IMR-90 (cell line): ENCODE measurements at regions of chr1 and their contacts with region 1.

Region 1: GRCh38 chr1:66695116-66695515 is 57.1 kb upstream of the DYNLT5 start:
- DNase-seq: no peak
- ATAC-seq: no peak
- H3K4me3 ChIP-seq: no peak overlapping the region
- H3K27ac ChIP-seq: no peak overlapping the region
- H3K4me1 ChIP-seq: no peaks in the 10 kb centered on the region
- H3K27me3 ChIP-seq: no peaks in the 10 kb centered on the region
- CTCF ChIP-seq: no peak
- POLR2A ChIP-seq: no peak
- RAD21 ChIP-seq: no peak

Region 2: DNA sequence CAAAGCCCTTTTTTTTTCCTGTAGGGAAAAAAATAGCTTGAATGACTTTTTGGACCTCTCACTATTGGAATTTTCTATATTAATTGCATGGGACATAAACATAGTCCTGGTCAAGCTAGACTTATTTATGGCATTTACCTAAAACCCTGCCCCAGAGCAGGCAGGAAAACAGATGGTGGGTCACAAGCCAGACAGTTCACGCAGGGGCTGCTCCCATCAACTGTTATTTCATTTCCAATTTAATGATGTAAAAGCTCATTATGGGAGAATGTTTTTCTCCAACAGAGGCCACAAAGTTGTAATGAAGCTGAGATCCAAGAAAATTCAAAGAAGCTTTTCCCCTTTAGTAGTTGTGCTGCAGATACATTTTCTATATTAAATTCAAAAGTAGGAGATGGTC is 62.0 kb before region 1 on chr1:
- CTCF ChIA-PET with region 1: no interaction called
- POLR2A ChIA-PET with region 1: no interaction called
- dilution Hi-C with region 1: no loop called
- in situ Hi-C with region 1: loop called (anchors 10 kb)
- intact Hi-C with region 1: no loop called
- DNase-seq: no peak
- ATAC-seq: no peak
- H3K4me3 ChIP-seq: no peak overlapping the region
- H3K27ac ChIP-seq: no peak overlapping the region
- H3K4me1 ChIP-seq: no peaks in the 10 kb centered on the region
- H3K27me3 ChIP-seq: no peaks in the 10 kb centered on the region
- CTCF ChIP-seq: no peak
- POLR2A ChIP-seq: no peak
- RAD21 ChIP-seq: no peak